Activated B cell treated with CpG ODN at 0.5 μM for 24 hours (primary cell): ENCODE measurements at regions of chr6 and their contacts with region 1.

Region 1: GRCh38 chr6:150617496-150618460 is 18.1 kb downstream of the PLEKHG1 start:
- DNase-seq: no peak
- ATAC-seq: no peak
- H3K4me3 Mint-ChIP-seq: peak overlapping the region; percentile 22
- H3K27ac Mint-ChIP-seq: peak overlapping the region; percentile 65
- H3K4me1 Mint-ChIP-seq: peaks cover 95% of the 10 kb centered on the region
- H3K27me3 Mint-ChIP-seq: no peaks in the 10 kb centered on the region
- CTCF ChIP-seq: no peak

Region 2: DNA sequence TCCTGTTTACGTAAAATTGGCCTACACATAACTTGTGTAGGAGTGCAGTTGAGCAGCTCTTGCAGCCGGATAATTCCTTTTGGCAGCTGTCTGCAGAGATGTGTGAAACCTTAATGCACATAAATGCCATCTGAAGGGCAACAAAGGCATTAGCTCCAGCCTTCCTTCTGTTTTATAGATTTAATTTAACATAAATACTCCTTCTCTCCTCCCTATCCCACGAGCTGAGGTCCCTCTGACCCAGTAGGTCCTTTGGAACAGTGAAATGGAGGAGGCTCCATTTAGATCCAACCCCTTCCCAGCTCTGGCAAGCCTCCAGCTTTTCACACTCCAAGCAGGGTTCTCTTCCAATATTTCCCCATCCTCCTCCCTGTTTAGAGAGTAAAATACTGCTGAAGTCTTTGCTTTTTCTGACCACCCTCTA is 11.6 kb before region 1 on chr6:
- CTCF ChIA-PET with region 1: interaction called, 19 read pairs
- POLR2A ChIA-PET with region 1: interaction called, 177 read pairs
- intact Hi-C with region 1: loop called (anchors 1 kb)
- DNase-seq: no peak
- ATAC-seq: no peak
- H3K4me3 Mint-ChIP-seq: no peak overlapping the region
- H3K27ac Mint-ChIP-seq: no peak overlapping the region
- H3K4me1 Mint-ChIP-seq: peaks cover 85% of the 10 kb centered on the region
- H3K27me3 Mint-ChIP-seq: no peaks in the 10 kb centered on the region
- CTCF ChIP-seq: no peak